Sciatic nerve (tissue), 2 donors: ENCODE measurements at regions of chr12 and their contacts with region 1.

Region 1: DNA sequence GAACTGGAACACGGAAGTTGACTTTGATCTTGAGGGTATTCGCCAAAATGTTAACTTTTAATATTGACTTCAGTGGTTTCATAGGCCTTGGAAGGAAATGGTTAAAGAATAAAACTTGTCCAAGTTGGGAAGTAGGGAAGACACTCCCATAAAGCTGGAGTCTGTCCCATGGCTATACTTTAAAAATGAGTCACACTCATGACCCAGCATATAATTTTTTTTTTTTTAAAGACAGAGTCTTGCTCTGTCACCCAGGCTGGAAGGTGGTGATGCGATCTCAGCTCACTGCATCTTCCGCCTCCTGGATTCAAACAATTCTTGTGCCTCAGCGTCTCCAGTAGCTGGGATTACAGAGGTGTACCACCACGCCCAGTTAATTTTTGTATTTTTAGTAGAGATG is 19.6 kb downstream of the TMPRSS12 start:
- DNase-seq: no peak
- ATAC-seq: no peak

Region 2: GRCh38 chr12:50297027-50297426 is 565.3 kb before region 1 on chr12:
- intact Hi-C with region 1: no loop called
- DNase-seq: no peak
- ATAC-seq: no peak

Region 3: DNA sequence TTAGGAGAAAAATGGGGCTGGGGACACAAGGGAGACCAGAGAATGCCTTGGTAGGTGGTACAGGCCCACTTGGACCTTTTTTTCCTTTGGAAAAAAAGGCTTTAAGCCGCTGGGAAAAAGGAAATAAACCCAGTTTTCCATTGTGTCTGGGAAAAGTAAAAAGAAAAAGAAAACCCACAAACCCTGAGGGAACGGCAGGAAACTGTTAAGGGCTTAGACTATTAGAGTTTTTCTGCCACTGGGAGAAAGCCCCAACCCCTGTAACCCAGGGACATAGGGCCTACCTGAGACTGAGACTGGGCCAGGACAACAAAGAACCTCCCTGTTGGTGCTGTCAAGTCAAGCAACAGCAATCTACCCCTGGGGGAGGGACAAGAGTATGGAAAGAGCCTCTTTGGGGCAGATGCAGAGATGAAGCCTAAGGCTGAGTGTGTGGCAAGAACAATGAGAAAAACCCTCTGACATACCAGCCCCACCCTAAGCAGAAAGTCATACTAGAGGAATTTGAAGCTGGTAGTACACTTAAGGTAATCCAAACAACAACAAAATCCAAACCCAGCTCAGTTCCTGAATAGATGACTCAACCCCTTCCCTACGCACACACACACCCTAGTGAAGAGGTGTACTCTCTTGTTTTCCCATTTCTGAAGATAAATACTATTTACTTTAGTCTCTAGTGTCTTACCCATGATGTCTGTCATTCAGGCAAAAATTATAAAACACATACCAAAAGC is 75.7 kb before region 1 on chr12:
- intact Hi-C with region 1: no loop called
- DNase-seq: no peak
- ATAC-seq: peak; percentile 76

Region 4: GRCh38 chr12:50887191-50887590 is 24.9 kb after region 1 on chr12:
- intact Hi-C with region 1: loop called (anchors 1 kb)
- DNase-seq: no peak
- ATAC-seq: no peak

Region 5: GRCh38 chr12:52566847-52567291 is 1704.6 kb after region 1 on chr12:
- intact Hi-C with region 1: no loop called
- DNase-seq: no peak
- ATAC-seq: no peak